WTC11 (cell line): ENCODE measurements at regions of chr9 and their contacts with region 1.

Region 1: DNA sequence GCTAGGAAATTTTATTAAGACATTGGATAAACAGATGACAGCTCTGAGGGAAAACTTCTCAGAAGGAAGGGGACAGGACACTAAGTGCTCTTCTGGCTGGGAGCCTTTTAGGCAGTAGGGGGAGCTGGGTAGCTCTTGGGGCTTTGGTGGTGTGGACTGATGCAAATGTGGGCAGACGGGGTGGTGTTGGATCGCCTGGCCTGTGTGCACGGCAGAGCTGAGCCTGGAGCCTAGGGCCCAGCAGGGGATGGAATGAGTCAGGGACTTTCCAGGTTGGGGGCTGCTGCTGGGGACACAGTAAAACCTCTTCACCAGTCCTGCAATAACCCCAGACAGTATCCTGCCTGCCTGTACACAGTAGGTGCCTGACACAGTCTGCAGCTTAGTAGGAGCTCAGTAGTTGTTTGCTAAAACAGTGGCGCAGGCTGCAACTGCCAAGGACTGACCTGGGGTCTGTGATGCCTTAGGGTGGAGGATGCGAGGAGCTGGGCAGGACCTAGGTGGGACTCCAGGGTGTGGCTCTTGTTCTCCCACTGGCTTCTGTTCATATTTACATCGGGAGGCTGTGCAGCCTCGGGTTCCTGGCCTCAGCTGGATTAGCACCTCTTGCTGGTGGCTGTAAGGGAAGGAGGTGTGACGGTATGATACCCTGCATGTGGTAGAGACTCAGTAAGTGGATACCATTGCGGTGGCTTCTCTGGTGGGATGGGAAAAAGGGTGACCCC is 83.8 kb downstream of the DAB2IP start:
- DNase-seq: peak; percentile 76
- ATAC-seq: peak; percentile 81
- H3K4me3 Mint-ChIP-seq: peak overlapping the region; percentile 85
- H3K27ac Mint-ChIP-seq: peak overlapping the region; percentile 86
- H3K4me1 Mint-ChIP-seq: peaks cover 66% of the 10 kb centered on the region
- H3K27me3 Mint-ChIP-seq: peaks cover 3% of the 10 kb centered on the region; the same call in 1 of the 2 replicates
- CTCF ChIP-seq: no peak; the same call in 1 of the 2 replicates

Region 2: GRCh38 chr9:121573717-121574485 is 161.3 kb before region 1 on chr9:
- CTCF ChIA-PET with region 1: no interaction called
- POLR2A ChIA-PET with region 1: no interaction called
- DNase-seq: no peak
- ATAC-seq: no peak
- H3K4me3 Mint-ChIP-seq: no peak overlapping the region
- H3K27ac Mint-ChIP-seq: no peak overlapping the region
- H3K4me1 Mint-ChIP-seq: peaks cover 3% of the 10 kb centered on the region; the same call in 1 of the 2 replicates
- H3K27me3 Mint-ChIP-seq: no peaks in the 10 kb centered on the region
- CTCF ChIP-seq: no peak

Region 3: GRCh38 chr9:121698627-121699570 is 36.3 kb before region 1 on chr9:
- CTCF ChIA-PET with region 1: interaction called, 33 read pairs
- POLR2A ChIA-PET with region 1: no interaction called
- DNase-seq: peak; percentile 77
- ATAC-seq: peak; percentile 66
- H3K4me3 Mint-ChIP-seq: peak overlapping the region; percentile 56
- H3K27ac Mint-ChIP-seq: no peak overlapping the region
- H3K4me1 Mint-ChIP-seq: peaks cover 35% of the 10 kb centered on the region
- H3K27me3 Mint-ChIP-seq: peaks cover 3% of the 10 kb centered on the region; the same call in 1 of the 2 replicates
- CTCF ChIP-seq: no peak

Region 4: GRCh38 chr9:121718082-121718856 is 17.0 kb before region 1 on chr9:
- CTCF ChIA-PET with region 1: interaction called, 22 read pairs
- POLR2A ChIA-PET with region 1: interaction called, 4 read pairs
- DNase-seq: no peak
- ATAC-seq: peak; percentile 52
- H3K4me3 Mint-ChIP-seq: no peak overlapping the region
- H3K27ac Mint-ChIP-seq: peak overlapping the region; percentile 45; the same call in 1 of the 2 replicates
- H3K4me1 Mint-ChIP-seq: peaks cover 53% of the 10 kb centered on the region
- H3K27me3 Mint-ChIP-seq: no peaks in the 10 kb centered on the region
- CTCF ChIP-seq: no peak

Region 5: GRCh38 chr9:121751686-121752445 is 16.6 kb after region 1 on chr9:
- CTCF ChIA-PET with region 1: interaction called, 78 read pairs
- POLR2A ChIA-PET with region 1: no interaction called
- DNase-seq: no peak
- ATAC-seq: no peak
- H3K4me3 Mint-ChIP-seq: no peak overlapping the region
- H3K27ac Mint-ChIP-seq: peak overlapping the region; percentile 60
- H3K4me1 Mint-ChIP-seq: 0 out of 2 replicates have a peak, but pooled peaks cover 2% of the 10 kb centered on the region
- H3K27me3 Mint-ChIP-seq: no peaks in the 10 kb centered on the region
- CTCF ChIP-seq: no peak

Region 6: GRCh38 chr9:121871431-121872025 is 136.3 kb after region 1 on chr9:
- CTCF ChIA-PET with region 1: no interaction called
- POLR2A ChIA-PET with region 1: no interaction called
- DNase-seq: no peak
- ATAC-seq: no peak
- H3K4me3 Mint-ChIP-seq: no peak overlapping the region
- H3K27ac Mint-ChIP-seq: no peak overlapping the region
- H3K4me1 Mint-ChIP-seq: no peaks in the 10 kb centered on the region
- H3K27me3 Mint-ChIP-seq: no peaks in the 10 kb centered on the region
- CTCF ChIP-seq: no peak

Region 7: DNA sequence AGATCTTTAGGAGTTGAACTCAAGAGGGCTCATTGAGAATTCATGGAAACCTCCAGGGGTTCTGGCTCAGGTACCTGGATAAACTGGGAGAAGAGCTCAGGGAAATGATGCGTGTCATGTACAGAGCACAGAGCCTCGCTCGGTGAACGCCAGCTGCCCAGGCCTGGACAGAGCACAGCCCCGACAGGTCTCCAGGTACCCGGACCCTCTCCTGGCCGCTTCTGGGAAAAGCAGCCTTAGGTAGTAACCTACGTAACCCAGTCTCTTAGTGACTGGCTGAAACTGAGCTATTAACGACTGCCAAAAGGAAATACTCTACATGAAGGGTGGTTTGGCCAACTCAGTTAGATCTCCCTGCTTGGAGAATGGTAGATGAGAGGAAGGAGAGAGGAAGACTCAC is 200.5 kb after region 1 on chr9:
- CTCF ChIA-PET with region 1: interaction called, 44 read pairs
- POLR2A ChIA-PET with region 1: no interaction called
- DNase-seq: peak; percentile 50
- ATAC-seq: peak; percentile 96
- H3K4me3 Mint-ChIP-seq: no peak overlapping the region
- H3K27ac Mint-ChIP-seq: no peak overlapping the region
- H3K4me1 Mint-ChIP-seq: peaks cover 23% of the 10 kb centered on the region
- H3K27me3 Mint-ChIP-seq: peaks cover 2% of the 10 kb centered on the region; the same call in 1 of the 2 replicates
- CTCF ChIP-seq: no peak

Region 8: DNA sequence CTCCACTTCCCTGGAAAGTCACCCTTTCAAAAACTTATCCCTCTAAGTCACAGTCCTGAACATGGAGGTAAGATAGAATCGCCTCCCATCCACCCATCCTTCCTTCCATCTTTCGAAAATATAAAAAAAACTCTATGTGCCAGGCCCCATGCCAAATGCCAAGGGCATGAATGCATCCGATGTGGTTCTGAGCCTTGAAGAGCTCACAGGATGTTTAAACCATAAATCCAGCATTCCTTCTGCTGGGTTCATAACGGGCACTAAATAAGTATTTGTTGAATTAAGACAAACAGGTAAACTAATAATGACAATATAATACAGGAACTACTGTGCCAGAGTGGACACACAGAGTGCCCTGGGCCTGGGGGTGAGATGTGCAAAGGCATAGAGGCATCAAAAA is 210.6 kb after region 1 on chr9:
- CTCF ChIA-PET with region 1: no interaction called
- POLR2A ChIA-PET with region 1: interaction called, 10 read pairs
- DNase-seq: no peak
- ATAC-seq: no peak
- H3K4me3 Mint-ChIP-seq: no peak overlapping the region
- H3K27ac Mint-ChIP-seq: no peak overlapping the region
- H3K4me1 Mint-ChIP-seq: peaks cover 16% of the 10 kb centered on the region
- H3K27me3 Mint-ChIP-seq: peaks cover 10% of the 10 kb centered on the region; the same call in 1 of the 2 replicates
- CTCF ChIP-seq: no peak

Region 9: GRCh38 chr9:121989010-121989409 is 253.8 kb after region 1 on chr9:
- CTCF ChIA-PET with region 1: interaction called, 16 read pairs
- POLR2A ChIA-PET with region 1: no interaction called
- DNase-seq: peak; percentile 76
- ATAC-seq: peak; percentile 94
- H3K4me3 Mint-ChIP-seq: no peak overlapping the region
- H3K27ac Mint-ChIP-seq: no peak overlapping the region
- H3K4me1 Mint-ChIP-seq: no peaks in the 10 kb centered on the region
- H3K27me3 Mint-ChIP-seq: peaks cover 17% of the 10 kb centered on the region
- CTCF ChIP-seq: no peak